Right cardiac atrium (tissue), 5 donors: ENCODE measurements at regions of chr5 and their contacts with region 1.

Region 1: DNA sequence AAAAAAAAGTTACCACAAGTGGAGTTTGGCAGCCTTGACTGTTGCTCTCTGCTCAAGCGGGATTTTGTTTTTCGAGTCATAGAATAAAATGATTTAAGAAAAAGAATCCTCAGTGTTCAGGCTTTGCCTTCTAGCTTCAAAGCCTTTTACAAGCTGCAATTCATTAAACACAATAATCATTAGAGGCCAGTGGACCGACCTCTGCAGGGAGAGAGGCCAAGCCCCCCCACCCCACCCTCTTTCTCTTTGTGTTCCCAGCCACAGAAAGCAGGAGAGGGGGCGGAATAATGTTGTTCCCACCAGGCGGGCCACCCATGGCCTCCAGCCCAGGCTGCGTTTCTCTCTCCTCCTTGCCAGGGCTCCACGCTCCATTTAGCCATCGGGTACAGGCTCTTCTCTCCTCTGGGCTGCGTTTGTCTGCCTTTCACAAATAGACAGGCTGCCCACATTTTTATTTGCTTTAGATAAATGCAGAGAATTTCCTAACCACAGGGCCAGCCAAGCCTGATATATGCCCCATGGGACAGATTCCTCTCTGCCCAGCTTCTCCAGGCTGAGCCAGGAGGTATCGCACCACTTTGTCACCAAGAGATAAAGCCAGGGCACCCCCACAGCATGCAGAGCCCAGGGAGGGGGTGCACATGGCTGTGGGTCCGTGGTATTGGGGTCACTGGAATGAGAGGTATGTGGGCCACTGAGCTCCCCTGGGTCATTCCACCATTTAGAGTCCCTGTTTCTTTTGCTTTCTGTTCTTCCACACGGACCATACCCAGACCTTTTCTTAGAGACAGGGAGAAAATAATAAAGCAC is 318.8 kb downstream of the PIK3R1 start:
- DNase-seq: peak; percentile 23 to 87 (median 82)
- ATAC-seq: peak; percentile 73 to 93
- H3K4me3 ChIP-seq: peak overlapping the region; percentile 0
- H3K27ac ChIP-seq: peak overlapping the region; percentile 20
- H3K4me1 ChIP-seq: peaks cover 7% of the 10 kb centered on the region
- H3K27me3 ChIP-seq: no peaks in the 10 kb centered on the region

Region 2: DNA sequence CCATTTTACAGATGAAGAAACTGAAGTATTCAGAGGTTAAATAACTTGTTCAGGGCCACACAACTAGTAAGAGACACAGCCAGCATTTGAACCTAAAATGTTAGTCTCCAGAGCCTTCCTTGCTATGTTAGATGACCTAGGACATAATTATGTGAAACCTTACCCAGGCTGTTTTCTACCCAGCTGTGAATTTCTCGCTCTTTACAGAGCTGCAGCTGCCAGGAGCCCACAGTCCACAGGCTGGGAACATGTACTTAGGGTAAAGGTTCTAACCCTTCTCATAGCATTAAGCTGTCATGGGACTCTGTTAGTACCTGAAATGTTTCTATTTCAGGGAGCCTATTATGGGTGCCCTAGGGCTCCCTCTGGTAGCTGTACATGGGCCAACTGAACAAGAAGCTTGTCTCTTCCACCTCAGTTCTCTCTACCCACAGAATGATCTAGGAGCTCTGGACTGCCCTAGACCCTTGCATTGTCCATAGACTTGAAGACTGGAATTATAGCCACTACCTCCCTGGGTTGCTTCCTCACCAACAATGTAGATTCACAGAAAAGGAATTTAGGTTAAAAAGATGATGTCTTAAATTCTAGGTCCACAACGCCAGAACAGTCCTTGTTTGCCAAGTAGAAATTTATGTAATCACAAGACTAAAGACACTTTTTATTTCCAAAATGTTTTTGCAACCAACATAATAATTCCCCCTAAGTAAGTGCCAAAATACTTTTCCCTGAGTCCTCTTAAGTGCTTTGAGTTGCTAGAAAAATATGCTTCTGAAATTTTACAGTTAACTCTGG is 55.8 kb before region 1 on chr5:
- intact Hi-C with region 1: loop called in 1 of 4 experiments (anchors 10 kb)
- DNase-seq: peak in 1 of 3 donors; percentile 48
- ATAC-seq: peak; percentile 31 to 62
- H3K4me3 ChIP-seq: no peak overlapping the region
- H3K27ac ChIP-seq: peak overlapping the region; percentile 21
- H3K4me1 ChIP-seq: peaks cover 4% of the 10 kb centered on the region
- H3K27me3 ChIP-seq: no peaks in the 10 kb centered on the region